ENCODE measurements at regions of chr20 and their contacts with region 1.

Region 1: DNA sequence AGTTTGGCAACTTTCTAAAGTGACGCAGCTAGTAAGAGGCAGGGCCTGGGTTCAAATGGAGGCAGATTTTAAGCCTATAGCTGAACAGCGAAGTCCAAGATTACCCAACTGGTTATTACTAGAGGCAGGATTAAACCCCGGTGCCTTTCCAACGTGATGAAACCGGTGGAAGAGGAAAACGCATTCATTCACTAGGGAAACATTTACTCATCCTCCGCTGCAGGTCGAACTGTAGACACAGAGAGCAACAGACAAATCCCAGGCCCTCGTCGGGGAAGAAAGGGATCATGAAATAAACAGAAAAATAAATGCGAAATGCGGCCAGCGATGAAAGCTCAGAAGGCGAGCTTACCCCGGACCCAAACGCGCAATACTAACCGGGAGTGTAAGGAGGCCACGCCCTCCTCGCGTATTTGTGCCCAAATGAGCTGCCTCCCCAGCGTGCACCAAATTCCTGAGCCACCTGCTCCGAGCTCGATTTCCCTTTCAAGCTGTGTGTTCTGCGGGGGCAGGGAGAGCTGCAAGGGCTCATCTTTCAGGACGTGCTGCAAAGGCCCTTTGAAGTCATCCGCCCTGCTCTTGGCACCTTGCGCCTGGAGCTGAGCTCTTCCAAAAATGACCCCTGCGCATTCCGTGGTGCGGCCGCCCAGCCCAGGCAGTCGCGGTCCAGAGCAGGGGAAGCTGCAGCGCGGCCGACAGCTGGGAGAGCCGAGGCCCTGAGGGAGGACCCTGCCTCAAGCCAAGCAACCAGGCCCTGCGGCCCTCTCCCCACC is 46.9 kb downstream of the PDYN start:
- DNase-seq: peak; percentile 23
- H3K4me3 ChIP-seq: peak overlapping the region in 1 of 2 donors; percentile 7
- H3K27ac ChIP-seq: no peak overlapping the region
- H3K4me1 ChIP-seq: peaks cover 3% of the 10 kb centered on the region
- H3K27me3 ChIP-seq: no peaks in the 10 kb centered on the region
- CTCF ChIP-seq: no peak
- POLR2A ChIP-seq: no peak

Region 2: GRCh38 chr20:1357921-1358671 is 588.9 kb before region 1 on chr20:
- intact Hi-C with region 1: no loop called
- DNase-seq: no peak
- H3K4me3 ChIP-seq: no peak overlapping the region
- H3K27ac ChIP-seq: no peak overlapping the region
- H3K4me1 ChIP-seq: no peaks in the 10 kb centered on the region
- H3K27me3 ChIP-seq: no peaks in the 10 kb centered on the region
- CTCF ChIP-seq: no peak
- POLR2A ChIP-seq: no peak

Region 3: GRCh38 chr20:1802385-1803060 is 144.4 kb before region 1 on chr20:
- intact Hi-C with region 1: loop called (anchors 10 kb)
- DNase-seq: peak; percentile 57
- H3K4me3 ChIP-seq: peak overlapping the region; percentile 36 to 47
- H3K27ac ChIP-seq: peak overlapping the region in 1 of 2 donors; percentile 52
- H3K4me1 ChIP-seq: peaks cover 2% of the 10 kb centered on the region
- H3K27me3 ChIP-seq: no peaks in the 10 kb centered on the region
- CTCF ChIP-seq: peak in 3 of 4 experiments; percentile 45 to 85 (median 63)
- POLR2A ChIP-seq: no peak

Measured in prostate gland (tissue), 2 donors.